Dendritic cell treated with granulocyte-macrophage colony-stimulating factor and Interleukin-4, amounts not matched to agents 40 ng/mL and 50 ng/mL, for 4 days (primary cell): ENCODE measurements at regions of chr14 and their contacts with region 1.

Region 1: DNA sequence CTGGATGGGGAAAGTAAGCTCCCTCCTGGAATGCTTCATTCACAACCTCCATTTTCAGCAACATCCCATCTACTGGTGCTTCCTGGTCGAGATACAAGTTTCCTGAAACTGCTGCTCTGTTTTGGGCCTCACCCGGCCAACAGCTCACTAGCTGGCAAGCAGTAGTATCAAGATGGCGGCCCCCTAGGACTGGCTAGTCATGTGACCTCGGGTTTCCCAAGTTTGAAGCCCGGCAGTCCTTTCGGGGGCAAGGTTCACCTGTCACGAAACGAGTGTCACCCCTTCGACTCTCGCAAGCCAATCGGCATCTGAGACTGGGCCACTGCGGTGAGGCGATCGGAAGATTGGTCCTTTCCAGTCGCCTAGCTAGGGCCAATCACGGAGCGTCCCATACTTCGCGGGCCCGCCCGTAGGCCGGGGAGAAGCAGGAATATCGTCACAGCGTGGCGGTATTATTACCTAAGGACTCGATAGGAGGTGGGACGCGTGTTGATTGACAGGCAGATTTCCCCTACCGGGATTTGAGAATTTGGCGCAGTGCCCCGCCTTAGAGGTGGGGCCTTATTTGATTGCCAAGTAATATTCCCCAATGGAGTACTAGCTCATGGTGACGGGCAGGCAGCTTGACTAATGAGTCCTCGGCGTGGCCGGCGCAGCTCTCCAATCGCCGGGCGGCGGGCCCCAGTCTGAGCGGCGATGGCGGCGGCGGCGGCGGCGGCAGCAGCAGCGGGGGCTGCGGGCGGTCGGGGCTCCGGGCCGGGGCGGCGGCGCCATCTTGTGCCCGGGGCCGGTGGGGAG is at the start of gene PABPN1:
- H3K4me3 Mint-ChIP-seq: peak within 1 kb of the TSS; percentile 88
- H3K27ac Mint-ChIP-seq: peak within 1 kb of the TSS; percentile 97
- H3K4me1 Mint-ChIP-seq: peaks cover 42% of the 10 kb centered on the region
- H3K27me3 Mint-ChIP-seq: no peaks in the 10 kb centered on the region

Region 2: GRCh38 chr14:23269193-23269592 is 51.8 kb before region 1 on chr14:
- intact Hi-C with region 1: loop called (anchors 10 kb)
- H3K4me3 Mint-ChIP-seq: no peak overlapping the region
- H3K27ac Mint-ChIP-seq: no peak overlapping the region
- H3K4me1 Mint-ChIP-seq: peaks cover 5% of the 10 kb centered on the region
- H3K27me3 Mint-ChIP-seq: peaks cover 7% of the 10 kb centered on the region

Region 3: DNA sequence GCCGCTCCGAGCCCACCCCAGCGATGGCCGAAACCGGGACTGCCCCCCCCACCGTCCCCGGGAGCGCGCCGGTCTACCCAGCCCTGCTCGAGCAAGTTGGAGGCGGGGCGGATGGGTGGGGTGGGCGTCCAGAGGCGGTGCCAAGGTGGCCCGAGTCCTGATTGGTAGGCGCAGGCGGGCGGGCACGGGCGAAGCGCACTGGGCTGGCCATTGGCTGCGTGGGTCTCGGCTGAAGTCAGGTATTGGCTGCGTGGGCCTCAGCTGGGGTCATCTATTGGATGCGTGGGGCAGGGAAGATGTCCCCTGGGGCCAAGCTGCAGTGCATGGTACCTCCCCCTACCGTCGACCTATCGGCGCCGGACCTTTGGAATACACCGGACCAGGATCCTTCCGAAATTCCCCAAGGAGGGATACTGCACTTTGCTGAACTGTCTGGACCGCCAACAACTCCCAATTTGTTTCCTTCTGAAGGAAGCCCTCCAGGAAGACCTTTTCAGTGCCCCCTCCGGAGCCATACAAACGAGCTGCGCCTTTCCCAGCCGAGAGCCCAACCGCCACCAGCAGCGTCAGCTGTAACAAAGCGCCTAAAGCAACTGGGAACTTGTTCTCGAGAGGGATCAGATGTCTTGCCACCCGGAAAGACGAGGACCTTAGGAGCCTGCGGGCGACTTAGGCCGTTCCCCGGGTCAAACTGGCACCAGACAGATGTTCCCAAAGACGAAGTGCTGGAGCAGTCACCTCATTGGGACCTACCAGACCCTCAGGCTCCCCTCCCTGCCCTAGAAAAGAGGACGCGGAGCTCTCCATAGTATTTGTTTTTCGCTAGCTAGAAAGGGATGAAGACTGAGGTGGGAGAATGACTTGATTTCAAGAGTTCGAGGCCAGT is 34.7 kb before region 1 on chr14 and contains the start of gene HOMEZ:
- intact Hi-C with region 1: loop called (anchors 1 kb)
- H3K4me3 Mint-ChIP-seq: peak within 1 kb of the TSS; percentile 98
- H3K27ac Mint-ChIP-seq: peak within 1 kb of the TSS; percentile 100
- H3K4me1 Mint-ChIP-seq: peaks cover 33% of the 10 kb centered on the region
- H3K27me3 Mint-ChIP-seq: no peaks in the 10 kb centered on the region

Region 4: GRCh38 chr14:23301288-23301968 is 19.5 kb before region 1 on chr14:
- intact Hi-C with region 1: loop called (anchors 1 kb)
- H3K4me3 Mint-ChIP-seq: peak overlapping the region; percentile 92
- H3K27ac Mint-ChIP-seq: peak overlapping the region; percentile 98
- H3K4me1 Mint-ChIP-seq: peaks cover 52% of the 10 kb centered on the region
- H3K27me3 Mint-ChIP-seq: no peaks in the 10 kb centered on the region

Region 5: DNA sequence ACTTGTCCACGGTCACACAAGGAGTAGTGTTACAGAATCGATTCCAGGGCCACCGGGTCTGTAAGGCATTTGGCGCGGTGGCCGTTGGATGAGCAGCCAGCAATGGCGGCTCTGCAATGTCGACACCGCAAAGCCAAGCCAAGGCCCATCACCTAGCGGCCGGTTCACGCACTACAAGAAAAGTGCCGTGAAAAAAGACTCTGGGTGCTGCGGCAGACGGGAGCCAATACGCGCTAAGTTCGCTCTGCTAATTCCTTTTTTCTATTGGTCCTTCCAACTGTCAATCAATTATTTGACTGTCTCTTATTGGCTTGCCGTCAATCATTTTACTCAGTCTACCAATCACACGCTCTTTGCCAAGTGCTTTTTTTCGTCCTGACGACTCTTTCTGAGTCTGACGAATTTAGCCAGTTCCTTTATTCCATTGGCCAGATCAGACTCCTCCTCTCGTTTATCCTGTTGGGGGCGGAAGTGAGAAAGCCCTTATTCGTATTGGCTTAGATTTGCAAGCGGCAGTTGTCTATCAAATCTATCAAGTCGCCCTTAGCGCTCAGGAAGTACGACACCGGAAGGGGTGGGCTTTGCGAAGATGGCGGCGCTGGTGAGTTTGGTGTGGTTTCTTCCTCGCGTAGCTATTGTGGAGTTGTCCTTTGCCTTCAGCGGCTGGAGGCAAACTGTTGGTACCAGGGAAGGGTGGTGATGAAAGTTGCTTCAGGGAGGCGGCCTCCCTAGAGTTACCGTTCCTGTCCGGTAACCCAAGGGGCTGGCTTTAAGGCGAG is 148.3 kb after region 1 on chr14 and contains the start of gene NGDN:
- intact Hi-C with region 1: loop called (anchors 1 kb)
- H3K4me3 Mint-ChIP-seq: peak within 1 kb of the TSS; percentile 6
- H3K27ac Mint-ChIP-seq: no peak within 1 kb of the TSS
- H3K4me1 Mint-ChIP-seq: no peaks in the 10 kb centered on the region
- H3K27me3 Mint-ChIP-seq: peaks cover 2% of the 10 kb centered on the region

Region 6: DNA sequence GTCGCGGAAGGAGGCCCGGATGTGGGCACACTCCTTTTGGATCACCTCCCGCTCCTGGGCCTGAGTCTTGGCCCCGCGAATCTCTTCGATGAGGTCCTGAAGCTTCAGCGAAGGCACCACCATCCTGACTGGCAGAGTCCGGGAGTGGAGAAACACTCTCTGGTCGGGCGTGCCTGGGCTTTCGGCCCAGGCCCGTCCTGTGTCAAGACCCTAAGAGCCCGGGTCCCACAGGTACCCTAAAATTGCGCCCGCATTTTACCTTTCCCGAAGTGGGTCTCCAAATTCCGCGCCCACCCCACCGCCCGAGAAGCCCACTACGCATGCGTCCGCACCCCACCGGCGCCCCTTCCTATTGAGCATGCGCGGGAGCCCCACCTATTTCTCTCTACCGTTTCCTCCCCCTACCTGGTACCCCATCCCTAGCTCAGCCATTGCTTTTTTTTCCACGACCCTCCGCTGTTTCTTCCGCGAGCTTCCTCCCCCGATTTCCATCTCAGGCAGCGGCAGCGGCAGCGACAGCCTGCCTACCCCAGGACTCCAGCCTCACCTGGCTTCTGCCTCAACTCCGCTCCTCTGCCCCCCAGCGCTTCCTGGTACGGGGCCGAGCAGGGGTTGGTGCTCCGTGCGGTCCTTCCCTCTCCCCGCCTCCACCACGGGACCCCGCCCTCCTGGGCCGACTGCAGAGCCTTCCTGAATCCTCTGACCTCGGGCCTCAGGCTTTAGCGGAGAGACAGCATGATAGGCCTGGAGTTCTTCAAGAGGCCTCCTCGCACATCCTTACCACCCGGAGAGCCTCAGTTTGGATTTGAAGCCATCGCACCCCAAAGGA is 246.4 kb after region 1 on chr14 and contains the start of gene AP1G2:
- intact Hi-C with region 1: loop called (anchors 5 kb)
- H3K4me3 Mint-ChIP-seq: peak within 1 kb of the TSS; percentile 97
- H3K27ac Mint-ChIP-seq: peak within 1 kb of the TSS; percentile 92
- H3K4me1 Mint-ChIP-seq: peaks cover 89% of the 10 kb centered on the region
- H3K27me3 Mint-ChIP-seq: no peaks in the 10 kb centered on the region